ENCODE measurements at regions of chr2 and their contacts with region 1.

Region 1: GRCh38 chr2:75676464-75676863 is 29.9 kb downstream of the MRPL19 start:
- DNase-seq: no peak
- H3K4me3 Mint-ChIP-seq: no peak overlapping the region
- H3K27ac Mint-ChIP-seq: no peak overlapping the region
- H3K4me1 Mint-ChIP-seq: peaks cover 18% of the 10 kb centered on the region
- H3K27me3 Mint-ChIP-seq: no peaks in the 10 kb centered on the region

Region 2: GRCh38 chr2:75640621-75641121 is 35.8 kb before region 1 on chr2:
- intact Hi-C with region 1: loop called (anchors 1 kb)
- DNase-seq: peak; percentile 21
- H3K4me3 Mint-ChIP-seq: no peak overlapping the region
- H3K27ac Mint-ChIP-seq: no peak overlapping the region
- H3K4me1 Mint-ChIP-seq: peaks cover 12% of the 10 kb centered on the region
- H3K27me3 Mint-ChIP-seq: peaks cover 18% of the 10 kb centered on the region

Region 3: DNA sequence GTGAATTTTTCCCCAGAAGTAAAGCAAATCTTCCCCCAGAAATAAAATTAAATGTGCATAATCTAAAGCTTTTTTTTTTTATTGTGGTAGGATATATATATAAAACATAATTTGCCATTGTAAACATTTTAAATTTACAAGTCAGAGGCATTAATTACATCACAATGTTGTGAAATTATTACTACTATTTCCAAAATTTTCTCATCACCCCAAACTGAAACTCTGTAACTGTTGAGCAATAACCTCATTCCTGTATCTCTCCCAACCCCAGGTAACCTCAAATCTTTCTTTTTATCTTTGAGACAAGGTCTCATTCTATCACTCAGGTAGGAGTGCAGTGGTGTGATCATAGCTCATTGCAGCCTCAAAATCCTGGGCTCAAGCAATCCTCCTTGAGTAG is 18.7 kb before region 1 on chr2:
- intact Hi-C with region 1: loop called (anchors 2 kb)
- DNase-seq: no peak
- H3K4me3 Mint-ChIP-seq: no peak overlapping the region
- H3K27ac Mint-ChIP-seq: no peak overlapping the region
- H3K4me1 Mint-ChIP-seq: peaks cover 6% of the 10 kb centered on the region
- H3K27me3 Mint-ChIP-seq: no peaks in the 10 kb centered on the region